SK-N-SH (cell line): ENCODE measurements at regions of chr6 and their contacts with region 1.

Region 1: DNA sequence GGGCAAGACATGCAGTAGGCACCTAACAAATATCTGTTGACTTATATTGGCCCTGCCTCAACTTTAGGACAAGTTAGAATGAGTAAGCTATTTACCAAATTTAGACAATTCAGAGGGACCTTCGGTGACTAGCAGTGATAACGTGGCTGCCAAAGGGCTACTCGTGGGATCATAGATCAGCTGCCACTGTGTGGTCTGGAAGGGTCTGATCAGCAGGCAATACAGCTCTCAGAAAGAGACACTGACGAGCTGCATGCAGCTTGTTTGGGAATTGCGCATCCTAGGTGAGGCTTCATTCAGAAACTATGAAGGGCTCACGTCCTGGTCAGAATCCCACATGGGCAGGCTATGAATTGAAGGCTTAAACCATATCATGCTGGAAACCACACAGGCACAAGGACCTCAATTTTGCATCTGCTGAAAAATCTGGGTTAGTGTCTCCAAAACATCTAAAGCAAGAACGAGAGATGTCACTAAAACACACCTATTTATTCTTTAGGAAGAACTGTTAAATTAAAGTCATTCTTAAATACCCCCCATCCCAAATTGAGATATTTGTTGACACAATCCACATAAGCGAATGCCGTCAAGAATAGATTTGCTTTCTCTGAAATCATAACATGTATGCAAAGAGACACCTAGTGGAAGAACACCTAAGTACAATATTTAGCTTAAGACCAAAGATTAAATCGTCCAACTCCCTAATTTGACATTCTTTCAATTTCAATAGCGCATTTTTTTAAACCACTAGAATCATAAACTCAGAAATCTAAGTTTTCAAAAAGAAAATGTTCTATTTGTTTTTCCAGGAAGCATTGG is 79.6 kb downstream of the IPCEF1 start:
- DNase-seq: peak; percentile 53
- H3K4me3 ChIP-seq: no peak overlapping the region; a peak in 1 of 4 replicates
- H3K27ac ChIP-seq: no peak overlapping the region
- H3K4me1 ChIP-seq: peaks cover 0 to 4% of the 10 kb centered on the region in 2 experiments; a peak in 1 of 4 replicates
- H3K27me3 ChIP-seq: no peaks in the 10 kb centered on the region
- CTCF ChIP-seq: peak; percentile 57
- EP300 ChIP-seq: no peak
- RAD21 ChIP-seq: peak; percentile 80

Region 2: DNA sequence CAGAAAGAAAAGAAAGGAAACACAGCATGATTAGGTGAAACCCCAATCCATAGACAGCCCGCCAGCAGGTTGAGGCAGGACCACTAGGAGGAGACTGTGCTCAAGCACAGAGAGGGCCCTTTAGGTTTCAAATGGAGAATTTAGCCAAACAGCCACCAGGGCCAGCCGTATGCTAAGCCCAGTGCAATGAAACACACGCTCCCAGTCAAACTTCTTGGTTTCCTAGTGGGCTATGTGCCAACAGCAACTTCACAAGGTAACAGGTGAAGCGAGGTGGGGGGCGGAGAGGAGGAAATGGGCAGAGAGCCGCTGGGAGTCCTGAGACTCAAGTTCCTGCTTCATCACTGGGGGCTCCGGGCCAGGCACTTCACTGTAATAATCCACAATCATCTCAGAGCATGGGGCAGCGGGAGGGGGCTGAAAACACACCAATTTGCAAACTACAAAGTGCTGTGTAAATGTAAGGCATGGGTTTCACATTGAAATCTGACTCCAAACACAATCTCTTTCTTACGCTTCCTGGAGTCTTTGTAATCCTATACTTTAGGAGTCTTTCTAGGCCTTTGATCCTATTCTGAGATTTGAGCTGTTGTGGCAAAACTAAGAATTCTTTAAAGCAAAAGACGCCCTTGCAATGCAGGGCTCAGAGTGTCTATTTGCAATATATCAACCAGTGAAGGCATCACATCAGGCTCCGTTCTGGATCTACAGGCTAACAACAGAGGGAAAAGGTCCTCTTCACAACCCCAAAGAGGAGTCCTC is 120.7 kb before region 1 on chr6:
- CTCF ChIA-PET with region 1: interaction called, 16 read pairs
- POLR2A ChIA-PET with region 1: no interaction called
- DNase-seq: peak; percentile 25
- H3K4me3 ChIP-seq: no peak overlapping the region
- H3K27ac ChIP-seq: no peak overlapping the region
- H3K4me1 ChIP-seq: no peaks in the 10 kb centered on the region; a peak in 1 of 4 replicates
- H3K27me3 ChIP-seq: no peaks in the 10 kb centered on the region
- CTCF ChIP-seq: peak; percentile 62
- EP300 ChIP-seq: no peak
- RAD21 ChIP-seq: peak; percentile 67

Region 3: GRCh38 chr6:154370545-154370944 is 93.5 kb after region 1 on chr6:
- CTCF ChIA-PET with region 1: interaction called, 10 read pairs
- POLR2A ChIA-PET with region 1: no interaction called
- DNase-seq: peak; percentile 52
- H3K4me3 ChIP-seq: no peak overlapping the region
- H3K27ac ChIP-seq: no peak overlapping the region
- H3K4me1 ChIP-seq: no peaks in the 10 kb centered on the region; a peak in 1 of 4 replicates
- H3K27me3 ChIP-seq: no peaks in the 10 kb centered on the region
- CTCF ChIP-seq: peak; percentile 63
- EP300 ChIP-seq: no peak
- RAD21 ChIP-seq: peak; percentile 75

Region 4: DNA sequence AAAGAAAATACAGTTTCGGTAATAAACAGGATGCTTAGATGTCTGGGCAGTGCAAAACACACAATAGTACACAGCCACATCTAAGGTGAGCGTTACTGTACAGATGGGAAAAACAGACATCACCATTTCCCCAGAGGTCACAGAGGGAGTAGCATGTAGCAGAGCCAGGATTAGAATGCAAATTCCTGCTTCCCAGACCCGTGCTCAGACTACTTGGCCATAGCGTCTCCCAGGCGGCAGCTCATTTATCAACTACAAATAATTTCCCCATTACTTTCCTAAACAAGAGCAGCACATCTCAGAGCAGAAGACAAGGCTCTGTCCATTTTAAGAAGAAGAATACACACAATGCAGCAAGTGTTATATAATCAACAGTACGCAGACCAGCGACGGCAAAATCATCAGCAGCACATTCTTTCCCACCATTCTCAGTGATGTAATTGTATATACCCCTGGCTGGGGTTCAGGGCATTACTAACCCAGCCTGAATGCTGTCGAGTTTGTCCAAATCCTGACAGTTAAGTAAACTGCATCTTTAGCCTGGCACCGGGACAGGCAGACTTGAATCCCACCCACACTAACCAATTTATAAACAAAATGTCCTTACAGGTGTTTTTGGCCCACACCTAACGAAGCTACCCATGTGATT is 171.6 kb after region 1 on chr6:
- CTCF ChIA-PET with region 1: interaction called, 11 read pairs
- POLR2A ChIA-PET with region 1: no interaction called
- DNase-seq: peak; percentile 78
- H3K4me3 ChIP-seq: peak overlapping the region; percentile 18 to 33; a peak in 3 of 4 replicates
- H3K27ac ChIP-seq: peak overlapping the region; percentile 89 to 99
- H3K4me1 ChIP-seq: peaks cover 23 to 41% of the 10 kb centered on the region in 2 experiments; a peak in 3 of 4 replicates
- H3K27me3 ChIP-seq: no peaks in the 10 kb centered on the region
- CTCF ChIP-seq: peak; percentile 46
- EP300 ChIP-seq: no peak; a peak in 1 of 4 replicates
- RAD21 ChIP-seq: peak; percentile 28; the same call in 1 of the 2 replicates